ENCODE measurements at regions of chr9 and their contacts with region 1.

Region 1: GRCh38 chr9:35657546-35658136 is at the start of gene RMRP:
- DNase-seq: peak; percentile 95 to 99 (median 96)
- H3K4me3 ChIP-seq: peak within 1 kb of the TSS; percentile 81 to 89 (median 84)
- H3K27ac ChIP-seq: peak within 1 kb of the TSS; percentile 100
- H3K4me1 ChIP-seq: peaks cover 11 to 55% (median 40%) of the 10 kb centered on the region in 4 experiments
- H3K27me3 ChIP-seq: no peaks in the 10 kb centered on the region

Region 2: GRCh38 chr9:35560625-35561337 is 96.9 kb before region 1 on chr9:
- CTCF ChIA-PET with region 1: no interaction called
- POLR2A ChIA-PET with region 1: no interaction called
- DNase-seq: no peak
- H3K4me3 ChIP-seq: no peak overlapping the region
- H3K27ac ChIP-seq: no peak overlapping the region
- H3K4me1 ChIP-seq: peaks cover 0 to 16% (median 8%) of the 10 kb centered on the region in 4 experiments
- H3K27me3 ChIP-seq: no peaks in the 10 kb centered on the region

Region 3: DNA sequence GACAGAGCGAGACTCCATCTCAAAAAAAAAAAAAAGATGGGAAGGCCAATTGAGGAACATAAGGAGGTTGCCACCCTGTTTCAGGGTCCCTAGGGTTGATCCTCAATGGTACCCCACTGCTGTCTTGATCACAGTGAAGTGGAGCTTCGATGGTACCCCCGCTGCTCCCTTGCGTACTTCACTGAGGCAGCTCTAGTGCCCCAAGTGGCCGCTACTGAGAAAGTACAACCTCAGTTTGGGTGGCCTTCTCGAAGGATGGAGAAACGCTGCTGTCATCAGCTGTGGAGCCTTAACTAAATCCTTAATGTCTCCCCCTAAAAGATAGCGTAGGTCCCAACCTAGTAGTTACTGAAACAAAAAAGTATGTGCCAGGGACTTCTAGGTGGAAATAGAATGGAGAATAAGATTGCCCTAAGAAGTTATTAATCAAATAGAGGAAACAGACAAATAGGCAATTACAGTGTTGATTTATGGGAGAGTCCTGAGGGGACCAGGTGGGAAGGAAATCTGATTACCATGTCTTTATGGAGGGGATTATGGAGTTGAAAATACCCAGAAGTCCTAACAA is 46.3 kb before region 1 on chr9:
- CTCF ChIA-PET with region 1: interaction called, 105 read pairs
- POLR2A ChIA-PET with region 1: no interaction called
- DNase-seq: peak; percentile 58 to 76 (median 75)
- H3K4me3 ChIP-seq: no peak overlapping the region
- H3K27ac ChIP-seq: no peak overlapping the region
- H3K4me1 ChIP-seq: peaks cover 0 to 7% (median 6%) of the 10 kb centered on the region in 4 experiments
- H3K27me3 ChIP-seq: no peaks in the 10 kb centered on the region

Region 4: DNA sequence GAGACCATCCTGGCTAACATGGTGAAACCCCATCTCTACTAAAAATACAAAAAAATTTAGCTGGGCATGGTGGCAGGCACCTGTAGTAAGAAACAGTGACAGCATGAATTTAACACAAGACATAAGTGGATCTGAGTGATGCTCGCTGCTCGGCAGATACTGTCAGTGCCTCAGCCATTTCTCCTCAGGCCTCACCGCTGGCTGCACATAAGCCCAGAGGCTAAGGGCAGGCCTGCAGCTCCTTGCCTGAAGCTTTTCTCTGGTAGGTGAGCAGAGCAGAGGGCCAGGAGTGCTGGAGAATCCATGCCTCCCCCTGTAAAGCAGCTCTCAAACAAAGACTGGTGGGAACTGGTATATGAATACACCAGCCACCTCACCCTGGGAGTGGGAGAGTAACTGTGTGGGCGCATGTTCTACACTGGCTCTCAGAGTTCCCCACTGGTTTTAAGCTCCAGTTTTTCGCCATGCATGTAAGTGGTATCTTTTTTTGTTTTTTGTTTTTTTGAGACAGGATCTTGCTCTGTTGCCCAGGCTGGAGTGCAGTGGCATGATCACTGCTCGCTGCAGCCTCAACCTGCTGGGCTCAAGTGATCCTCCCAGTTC is 29.2 kb before region 1 on chr9:
- CTCF ChIA-PET with region 1: no interaction called
- POLR2A ChIA-PET with region 1: no interaction called
- DNase-seq: no peak
- H3K4me3 ChIP-seq: no peak overlapping the region
- H3K27ac ChIP-seq: no peak overlapping the region
- H3K4me1 ChIP-seq: no peaks in the 10 kb centered on the region
- H3K27me3 ChIP-seq: no peaks in the 10 kb centered on the region

Region 5: DNA sequence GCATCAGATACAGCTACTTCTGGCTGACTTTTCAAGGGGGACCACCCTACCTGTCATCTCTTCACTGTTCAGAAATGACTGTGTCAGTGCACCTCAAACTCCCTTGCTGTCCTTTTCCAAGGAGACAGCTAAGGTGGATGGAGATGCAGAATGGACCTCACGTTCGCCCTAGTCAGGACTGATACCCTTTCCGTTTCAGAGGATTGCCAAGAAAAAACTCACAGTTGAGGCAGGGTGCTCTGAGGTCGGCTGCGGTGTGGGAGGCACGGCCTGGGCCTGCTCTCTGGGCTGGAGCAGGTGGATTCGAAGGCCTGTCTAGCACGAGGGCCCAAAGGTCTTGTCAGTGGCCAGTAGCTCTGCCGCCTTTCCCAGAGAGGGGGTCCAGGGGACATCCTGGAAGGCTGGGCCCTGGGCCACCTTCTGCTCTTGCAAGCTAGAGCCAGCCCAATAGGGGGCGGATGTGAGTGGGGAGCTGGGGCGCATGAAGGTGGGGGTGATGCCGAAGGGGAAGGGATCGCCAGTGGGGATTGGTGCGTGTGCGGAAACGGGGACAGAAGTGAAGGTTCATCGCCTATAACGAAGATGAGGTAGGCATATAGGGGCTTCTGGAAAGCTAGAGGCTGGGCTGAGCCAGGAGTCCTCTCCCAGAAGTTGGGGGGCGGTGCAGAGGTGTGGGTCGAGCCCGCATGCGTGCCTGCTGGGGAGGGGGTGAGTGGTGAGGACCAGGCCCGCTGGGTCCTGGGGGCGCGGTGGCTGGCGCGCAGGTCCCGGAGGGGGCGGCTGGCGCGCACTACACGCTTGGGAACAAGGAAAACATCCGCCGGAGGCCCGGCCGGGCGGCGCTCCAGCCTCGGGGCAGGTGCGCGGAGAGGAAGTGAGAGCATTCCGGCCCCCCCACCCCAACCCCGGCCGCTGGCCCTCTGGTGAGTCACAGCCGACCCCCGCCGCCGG is 98.9 kb after region 1 on chr9:
- CTCF ChIA-PET with region 1: no interaction called
- POLR2A ChIA-PET with region 1: no interaction called
- DNase-seq: peak; percentile 81 to 88 (median 86)
- H3K4me3 ChIP-seq: peak overlapping the region; percentile 71 to 93 (median 79)
- H3K27ac ChIP-seq: peak overlapping the region; percentile 92 to 97
- H3K4me1 ChIP-seq: peaks cover 29 to 65% (median 47%) of the 10 kb centered on the region in 4 experiments
- H3K27me3 ChIP-seq: no peaks in the 10 kb centered on the region